Naive thymus-derived CD4-positive, alpha-beta T cell (primary cell): ENCODE measurements at regions of chr17 and their contacts with region 1.

Region 1: DNA sequence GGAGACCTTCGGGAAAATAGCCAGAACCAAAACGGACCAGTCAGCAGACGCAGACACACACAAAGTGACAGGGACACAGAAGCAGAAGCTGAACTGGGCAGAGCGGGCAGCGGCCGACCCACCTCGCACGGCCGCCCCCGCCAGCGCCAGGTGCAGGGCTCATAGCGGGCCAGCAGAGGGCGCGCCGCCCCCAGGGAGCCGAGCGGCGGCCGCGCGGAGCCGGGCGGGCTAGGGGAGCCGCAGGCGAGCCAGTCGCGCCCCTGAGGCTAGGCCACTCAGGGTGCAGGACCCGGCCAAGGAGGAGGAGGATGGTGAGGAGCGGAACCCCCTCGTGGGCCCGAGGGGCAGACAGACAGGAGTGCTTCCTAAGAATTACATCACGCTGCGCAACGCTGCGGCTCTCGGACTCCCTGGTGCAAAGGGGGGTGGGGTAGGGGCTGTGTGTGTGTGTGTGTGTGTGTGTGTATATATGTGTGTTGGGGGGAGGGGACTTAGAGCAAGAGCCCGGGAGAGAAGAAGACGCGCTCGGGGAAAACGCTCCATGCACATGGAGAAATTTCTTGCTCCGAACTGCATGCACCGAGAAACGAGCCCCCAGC is 913 bp upstream of the NOG start:
- DNase-seq: peak in 8 of 9 donors; percentile 65 to 87 (median 81)
- ATAC-seq: peak; percentile 82
- H3K4me3 ChIP-seq: peak overlapping the region; percentile 71
- H3K4me3 Mint-ChIP-seq: peak overlapping the region; percentile 76 to 94 (median 90)
- H3K27ac ChIP-seq: peak overlapping the region; percentile 71
- H3K27ac Mint-ChIP-seq: peak overlapping the region in 8 of 9 donors; percentile 56 to 99 (median 84)
- H3K4me1 ChIP-seq: peaks cover under 1 to 12% of the 10 kb centered on the region in 2 donors
- H3K4me1 Mint-ChIP-seq: peaks cover 5 to 22% (median 14%) of the 10 kb centered on the region in 7 donors
- H3K27me3 ChIP-seq: peaks cover 0 to 5% of the 10 kb centered on the region in 2 donors
- H3K27me3 Mint-ChIP-seq: peaks cover 0 to 61% (median 27%) of the 10 kb centered on the region in 5 donors

Region 2: DNA sequence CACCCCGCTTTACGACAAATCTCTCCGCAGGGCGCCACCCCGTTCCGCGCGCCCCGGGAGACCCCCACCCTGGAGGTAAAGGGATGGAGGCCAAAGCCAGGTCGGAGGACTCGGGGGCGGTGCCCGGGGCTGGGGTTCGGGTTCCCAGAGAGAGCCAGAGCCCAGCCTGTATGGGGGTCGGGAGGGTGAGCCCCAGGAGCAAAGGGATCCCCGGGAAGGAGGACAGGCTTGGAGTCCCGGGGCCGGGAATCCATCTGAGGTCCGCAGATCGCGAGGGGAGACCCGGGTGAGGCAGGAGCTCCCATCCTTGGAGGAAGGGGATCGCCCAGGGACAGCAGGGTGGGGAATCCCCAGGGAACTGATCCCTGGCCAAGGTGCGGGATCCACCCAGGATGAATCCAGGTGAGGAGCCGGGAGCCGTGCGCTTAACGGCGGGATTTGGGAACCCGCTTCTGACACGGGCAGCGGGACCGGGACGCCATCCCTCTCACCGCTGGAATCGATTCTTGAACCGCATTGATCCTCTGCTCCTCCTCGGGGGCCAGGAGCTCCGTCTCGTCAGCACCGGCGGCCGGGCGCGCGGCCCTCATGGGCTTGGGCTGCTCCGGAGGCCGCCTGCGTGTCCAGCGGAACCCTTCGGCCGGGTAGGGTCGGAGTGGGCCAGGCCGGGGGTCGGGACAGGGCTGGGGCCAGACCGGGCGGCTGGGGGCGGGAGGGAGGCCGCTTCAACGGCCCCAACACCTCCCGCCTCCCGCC is 1171.2 kb before region 1 on chr17 and contains the start of gene MMD:
- CTCF ChIA-PET with region 1: no interaction called
- POLR2A ChIA-PET with region 1: no interaction called
- intact Hi-C with region 1: loop called in 1 of 2 experiments (anchors 5 kb)
- DNase-seq: peak in 6 of 9 donors; percentile 12 to 50 (median 24)
- ATAC-seq: no peak
- H3K4me3 ChIP-seq: peak within 1 kb of the TSS; percentile 89
- H3K4me3 Mint-ChIP-seq: peak within 1 kb of the TSS; percentile 89 to 96 (median 90)
- H3K27ac ChIP-seq: peak within 1 kb of the TSS; percentile 87
- H3K27ac Mint-ChIP-seq: peak within 1 kb of the TSS; percentile 83 to 98 (median 94)
- H3K4me1 ChIP-seq: peaks cover 11 to 21% of the 10 kb centered on the region in 2 donors
- H3K4me1 Mint-ChIP-seq: peaks cover 32 to 47% (median 43%) of the 10 kb centered on the region in 7 donors
- H3K27me3 ChIP-seq: no peaks in the 10 kb centered on the region
- H3K27me3 Mint-ChIP-seq: peaks cover 8 to 30% (median 19%) of the 10 kb centered on the region in 5 donors
- total RNA-seq, gene MMD: 6.6 to 35.3 (median 11.2) TPM

Region 3: GRCh38 chr17:56540836-56541235 is 51.8 kb before region 1 on chr17:
- CTCF ChIA-PET with region 1: no interaction called
- POLR2A ChIA-PET with region 1: no interaction called
- intact Hi-C with region 1: no loop called
- DNase-seq: no peak
- ATAC-seq: no peak
- H3K4me3 ChIP-seq: no peak overlapping the region
- H3K4me3 Mint-ChIP-seq: no peak overlapping the region
- H3K27ac ChIP-seq: no peak overlapping the region
- H3K27ac Mint-ChIP-seq: no peak overlapping the region
- H3K4me1 ChIP-seq: no peaks in the 10 kb centered on the region
- H3K4me1 Mint-ChIP-seq: no peaks in the 10 kb centered on the region
- H3K27me3 ChIP-seq: no peaks in the 10 kb centered on the region
- H3K27me3 Mint-ChIP-seq: peaks cover 2 to 18% (median 7%) of the 10 kb centered on the region in 5 donors

Region 4: DNA sequence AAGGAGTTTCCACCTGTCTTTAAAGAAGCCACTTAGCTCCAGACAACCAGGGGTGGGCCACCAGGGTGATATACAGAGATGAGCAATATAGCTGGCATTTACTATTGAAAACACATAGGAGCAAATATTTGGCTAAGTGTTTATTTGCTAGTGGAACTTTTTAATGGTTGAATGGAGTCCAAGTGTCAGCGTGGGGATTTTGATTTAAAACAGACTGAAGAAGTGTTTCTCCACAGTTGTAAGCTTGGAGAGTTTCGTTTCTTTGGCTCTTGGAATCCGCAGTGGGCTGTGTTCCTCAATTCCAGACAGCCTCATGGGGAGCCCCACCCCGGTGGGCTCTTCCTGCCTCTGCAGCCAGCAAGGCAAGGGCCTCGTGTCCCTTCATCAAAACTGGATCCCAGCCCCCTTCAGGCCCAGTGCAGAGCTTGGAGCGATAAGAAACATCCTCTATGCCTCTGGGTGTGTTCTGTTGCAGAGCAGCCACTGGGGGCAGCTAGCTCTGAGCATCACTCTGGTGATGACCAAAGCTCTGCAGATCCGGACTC is 37.0 kb after region 1 on chr17:
- CTCF ChIA-PET with region 1: interaction called, 22 read pairs
- POLR2A ChIA-PET with region 1: interaction called, 33 read pairs
- intact Hi-C with region 1: loop called in 1 of 2 experiments (anchors 1 kb)
- DNase-seq: peak in 7 of 9 donors; percentile 19 to 44 (median 33)
- ATAC-seq: peak; percentile 62
- H3K4me3 ChIP-seq: no peak overlapping the region
- H3K4me3 Mint-ChIP-seq: no peak overlapping the region
- H3K27ac ChIP-seq: no peak overlapping the region
- H3K27ac Mint-ChIP-seq: peak overlapping the region in 2 of 9 donors; percentile 14 to 18
- H3K4me1 ChIP-seq: peaks cover 0 to 10% of the 10 kb centered on the region in 2 donors
- H3K4me1 Mint-ChIP-seq: peaks cover 0 to 31% (median 9%) of the 10 kb centered on the region in 7 donors
- H3K27me3 ChIP-seq: no peaks in the 10 kb centered on the region
- H3K27me3 Mint-ChIP-seq: peaks cover 0 to 8% (median 0%) of the 10 kb centered on the region in 5 donors

Region 5: DNA sequence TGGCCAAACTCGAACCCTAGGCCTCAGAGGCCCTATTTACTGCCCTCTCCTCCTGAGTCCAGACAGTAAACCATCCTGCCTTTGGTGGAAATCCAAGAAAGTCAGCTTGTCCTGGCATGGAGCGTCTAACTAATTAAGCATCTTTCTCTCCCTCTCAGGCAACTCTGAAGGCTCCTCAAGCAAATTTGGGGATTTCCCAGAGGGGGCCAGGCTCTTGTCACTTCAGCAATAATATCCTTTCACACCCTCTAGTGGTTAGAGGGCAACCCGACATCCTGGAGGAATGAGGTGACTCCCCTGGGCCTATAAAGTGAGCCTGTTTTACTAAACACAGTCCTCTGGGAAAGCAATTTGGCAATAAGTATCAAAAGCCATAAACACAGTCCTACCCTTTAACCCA is 61.3 kb after region 1 on chr17:
- CTCF ChIA-PET with region 1: interaction called, 46 read pairs
- POLR2A ChIA-PET with region 1: no interaction called
- intact Hi-C with region 1: loop called (anchors 1 kb)
- DNase-seq: peak; percentile 15 to 88 (median 83)
- ATAC-seq: peak; percentile 99
- H3K4me3 ChIP-seq: no peak overlapping the region
- H3K4me3 Mint-ChIP-seq: peak overlapping the region in 4 of 10 donors; percentile 10 to 55 (median 34)
- H3K27ac ChIP-seq: peak overlapping the region; percentile 59
- H3K27ac Mint-ChIP-seq: peak overlapping the region in 8 of 9 donors; percentile 44 to 93 (median 88)
- H3K4me1 ChIP-seq: peaks cover 0 to 6% of the 10 kb centered on the region in 2 donors
- H3K4me1 Mint-ChIP-seq: peaks cover 5 to 21% (median 9%) of the 10 kb centered on the region in 7 donors
- H3K27me3 ChIP-seq: no peaks in the 10 kb centered on the region
- H3K27me3 Mint-ChIP-seq: peaks cover 0 to 18% (median 0%) of the 10 kb centered on the region in 5 donors

Region 6: GRCh38 chr17:56715613-56716357 is 123.2 kb after region 1 on chr17:
- CTCF ChIA-PET with region 1: interaction called, 32 read pairs
- POLR2A ChIA-PET with region 1: interaction called, 16 read pairs
- intact Hi-C with region 1: loop called (anchors 1 kb)
- DNase-seq: peak; percentile 56 to 79 (median 70)
- ATAC-seq: peak; percentile 96
- H3K4me3 ChIP-seq: no peak overlapping the region
- H3K4me3 Mint-ChIP-seq: peak overlapping the region in 1 of 10 donors; percentile 14
- H3K27ac ChIP-seq: no peak overlapping the region
- H3K27ac Mint-ChIP-seq: peak overlapping the region in 1 of 9 donors; percentile 13
- H3K4me1 ChIP-seq: no peaks in the 10 kb centered on the region
- H3K4me1 Mint-ChIP-seq: peaks cover 4 to 13% (median 8%) of the 10 kb centered on the region in 7 donors
- H3K27me3 ChIP-seq: no peaks in the 10 kb centered on the region
- H3K27me3 Mint-ChIP-seq: peaks cover 0 to 4% (median 0%) of the 10 kb centered on the region in 5 donors

Region 7: DNA sequence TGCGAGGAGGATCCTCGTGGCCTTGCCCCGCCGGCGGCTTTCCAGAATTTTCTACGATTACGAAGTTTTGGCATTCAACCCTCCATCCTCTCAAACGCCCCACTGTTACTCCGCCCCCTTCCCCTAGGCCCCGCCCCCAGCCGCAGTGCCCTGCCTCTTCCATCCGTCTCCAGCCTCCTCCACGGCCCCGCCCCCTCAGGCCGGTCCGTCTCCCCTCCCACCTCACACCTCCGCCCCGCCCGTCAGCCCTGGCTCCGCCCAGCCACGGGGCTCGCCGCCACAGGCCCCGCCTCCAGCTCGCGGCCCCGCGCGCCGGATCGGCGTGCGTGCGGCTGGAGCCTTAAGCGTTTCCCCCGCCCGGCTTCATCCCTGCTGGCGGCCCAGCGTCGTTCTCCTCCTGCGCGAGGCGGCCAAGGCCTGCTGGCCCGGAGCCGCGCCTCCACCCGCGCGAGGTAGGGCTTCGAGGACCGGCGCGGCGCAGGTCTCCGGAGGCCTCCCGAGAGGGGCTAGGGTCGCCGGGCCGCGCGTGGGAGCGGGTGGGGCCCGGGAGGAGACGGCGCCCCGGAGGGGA is 241.3 kb after region 1 on chr17 and contains the starts of genes C17orf67 and DGKE:
- CTCF ChIA-PET with region 1: no interaction called
- POLR2A ChIA-PET with region 1: interaction called, 15 read pairs
- intact Hi-C with region 1: loop called in 1 of 2 experiments (anchors 2 kb)
- DNase-seq: peak; percentile 95 to 100 (median 98)
- ATAC-seq: peak; percentile 97
- H3K4me3 ChIP-seq: peak within 1 kb of the TSS; percentile 91
- H3K4me3 Mint-ChIP-seq: peak within 1 kb of the TSS; percentile 91 to 98 (median 95)
- H3K27ac ChIP-seq: peak within 1 kb of the TSS; percentile 85
- H3K27ac Mint-ChIP-seq: peak within 1 kb of the TSS; percentile 83 to 95 (median 93)
- H3K4me1 ChIP-seq: peaks cover 41 to 42% of the 10 kb centered on the region in 2 donors
- H3K4me1 Mint-ChIP-seq: peaks cover 34 to 74% (median 62%) of the 10 kb centered on the region in 7 donors
- H3K27me3 ChIP-seq: no peaks in the 10 kb centered on the region
- H3K27me3 Mint-ChIP-seq: no peaks in the 10 kb centered on the region
- total RNA-seq, gene C17orf67: 3.6 to 9.1 (median 5.4) TPM
- total RNA-seq, gene DGKE: 23.7 to 39.2 (median 35.6) TPM

Region 8: DNA sequence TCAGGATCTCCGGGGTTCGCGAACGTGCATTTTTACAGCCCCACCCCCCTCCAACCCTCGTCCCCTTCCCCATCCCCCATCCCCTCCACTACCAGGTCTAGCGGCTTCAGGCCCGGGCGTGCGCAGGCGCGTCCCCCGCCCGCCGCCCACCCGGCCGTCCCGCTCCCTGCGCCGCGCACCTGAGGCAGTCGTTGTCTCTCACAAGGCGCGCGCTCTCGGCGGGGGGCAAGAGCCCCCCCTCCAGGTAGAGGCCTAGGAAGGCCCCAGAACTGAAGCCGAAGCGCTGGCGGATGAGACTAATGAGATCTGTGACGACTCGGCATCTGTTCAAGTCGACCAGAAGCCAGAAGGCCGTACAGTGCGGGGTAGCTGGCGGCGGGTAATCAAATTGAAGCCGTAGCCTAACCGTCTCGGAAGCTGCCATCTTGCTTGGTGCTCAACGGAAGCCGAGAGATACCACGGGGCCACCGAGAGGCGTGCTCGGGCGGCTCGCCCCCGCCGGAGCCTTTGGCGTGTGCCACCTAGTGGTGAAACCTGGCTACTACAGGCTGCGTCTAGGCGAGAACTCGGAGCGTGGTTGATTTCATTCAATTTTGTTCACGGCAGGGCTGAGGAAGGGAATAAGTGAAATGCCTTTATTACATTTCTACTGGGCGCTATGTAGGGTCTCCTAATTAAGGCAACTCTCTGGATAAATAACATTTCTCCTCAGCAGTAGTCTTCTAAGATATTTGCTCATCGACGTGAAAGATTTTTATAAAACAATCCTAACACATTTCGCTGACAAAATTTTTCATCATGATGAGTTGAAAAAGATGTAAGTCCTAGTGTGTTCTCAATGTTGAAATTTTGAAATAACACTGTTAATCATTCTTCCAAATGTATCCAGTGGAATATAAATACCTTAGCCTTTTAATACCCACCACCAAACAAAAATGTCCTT is 368.3 kb after region 1 on chr17 and contains the start of gene COIL:
- CTCF ChIA-PET with region 1: no interaction called
- POLR2A ChIA-PET with region 1: no interaction called
- intact Hi-C with region 1: loop called in 1 of 2 experiments (anchors 5 kb)
- DNase-seq: peak; percentile 90 to 96 (median 92)
- ATAC-seq: peak; percentile 100
- H3K4me3 ChIP-seq: peak within 1 kb of the TSS; percentile 80
- H3K4me3 Mint-ChIP-seq: peak within 1 kb of the TSS; percentile 80 to 93 (median 86)
- H3K27ac ChIP-seq: peak within 1 kb of the TSS; percentile 97
- H3K27ac Mint-ChIP-seq: peak within 1 kb of the TSS; percentile 78 to 95 (median 91)
- H3K4me1 ChIP-seq: peaks cover 6 to 11% of the 10 kb centered on the region in 2 donors
- H3K4me1 Mint-ChIP-seq: peaks cover 14 to 34% (median 28%) of the 10 kb centered on the region in 7 donors
- H3K27me3 ChIP-seq: no peaks in the 10 kb centered on the region
- H3K27me3 Mint-ChIP-seq: peaks cover 0 to 3% (median 0%) of the 10 kb centered on the region in 5 donors
- total RNA-seq, gene COIL: 13.1 to 22.7 (median 19.0) TPM